Activated CD4-positive, alpha-beta memory T cell treated with anti-CD3 and anti-CD28 coated beads for 36 hours (primary cell): ENCODE measurements at regions of chr1 and their contacts with region 1.

Region 1: GRCh38 chr1:111516005-111516535 is 12.6 kb upstream of the ADORA3 start:
- DNase-seq: peak; percentile 44
- H3K4me3 Mint-ChIP-seq: peak overlapping the region; percentile 48
- H3K27ac Mint-ChIP-seq: peak overlapping the region; percentile 71
- H3K4me1 Mint-ChIP-seq: peaks cover 35% of the 10 kb centered on the region
- H3K27me3 Mint-ChIP-seq: no peaks in the 10 kb centered on the region

Region 2: GRCh38 chr1:111364690-111365089 is 151.4 kb before region 1 on chr1:
- CTCF ChIA-PET with region 1: no interaction called
- POLR2A ChIA-PET with region 1: no interaction called
- intact Hi-C with region 1: no loop called
- DNase-seq: no peak
- H3K4me3 Mint-ChIP-seq: no peak overlapping the region
- H3K27ac Mint-ChIP-seq: no peak overlapping the region
- H3K4me1 Mint-ChIP-seq: no peaks in the 10 kb centered on the region
- H3K27me3 Mint-ChIP-seq: peaks cover 25% of the 10 kb centered on the region

Region 3: GRCh38 chr1:111559736-111560279 is 43.7 kb after region 1 on chr1:
- CTCF ChIA-PET with region 1: no interaction called
- POLR2A ChIA-PET with region 1: no interaction called
- intact Hi-C with region 1: loop called (anchors 5 kb)
- DNase-seq: no peak
- H3K4me3 Mint-ChIP-seq: no peak overlapping the region
- H3K27ac Mint-ChIP-seq: no peak overlapping the region
- H3K4me1 Mint-ChIP-seq: peaks cover 5% of the 10 kb centered on the region
- H3K27me3 Mint-ChIP-seq: no peaks in the 10 kb centered on the region

Region 4: DNA sequence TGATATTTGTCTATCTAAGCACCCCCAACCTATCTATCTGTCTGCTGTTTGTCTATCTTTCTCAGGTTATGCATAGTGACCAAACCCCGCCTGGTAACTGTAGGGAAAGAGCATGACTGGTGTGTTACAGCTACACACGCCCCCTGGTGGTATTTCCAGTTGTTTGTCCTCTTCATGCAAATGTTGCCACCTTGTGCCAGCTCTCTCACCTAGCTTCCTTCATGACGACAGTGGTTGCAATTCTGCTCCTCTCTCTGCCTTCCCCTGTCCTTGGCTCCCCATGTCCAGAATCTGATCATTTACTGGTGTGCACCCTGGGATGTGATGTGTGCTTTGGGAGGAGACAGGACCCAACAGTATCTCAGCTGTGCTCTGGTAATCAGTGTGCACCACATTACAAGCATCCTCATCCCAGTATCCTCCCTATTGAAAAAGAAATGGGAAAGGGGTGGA is 231.2 kb after region 1 on chr1:
- CTCF ChIA-PET with region 1: interaction called, 10 read pairs
- POLR2A ChIA-PET with region 1: no interaction called
- intact Hi-C with region 1: no loop called
- DNase-seq: peak; percentile 80
- H3K4me3 Mint-ChIP-seq: no peak overlapping the region
- H3K27ac Mint-ChIP-seq: no peak overlapping the region
- H3K4me1 Mint-ChIP-seq: peaks cover 3% of the 10 kb centered on the region
- H3K27me3 Mint-ChIP-seq: no peaks in the 10 kb centered on the region